ENCODE measurements at regions of chr14 and their contacts with region 1.

Region 1: GRCh38 chr14:93206793-93207467 is at the starts of genes GON7 and UBR7:
- DNase-seq: peak; percentile 97
- ATAC-seq: peak; percentile 92
- H3K4me3 Mint-ChIP-seq: peak within 1 kb of the TSS; percentile 99
- H3K27ac Mint-ChIP-seq: peak within 1 kb of the TSS; percentile 99
- H3K4me1 Mint-ChIP-seq: peaks cover 14% of the 10 kb centered on the region
- H3K27me3 Mint-ChIP-seq: no peaks in the 10 kb centered on the region
- CTCF ChIP-seq: no peak
- total RNA-seq, gene GON7: 7.1 to 8.0 TPM (median 7.4 TPM) in 3 replicates
- total RNA-seq, gene UBR7: 21.1 to 28.9 TPM (median 24.0 TPM) in 3 replicates

Region 2: DNA sequence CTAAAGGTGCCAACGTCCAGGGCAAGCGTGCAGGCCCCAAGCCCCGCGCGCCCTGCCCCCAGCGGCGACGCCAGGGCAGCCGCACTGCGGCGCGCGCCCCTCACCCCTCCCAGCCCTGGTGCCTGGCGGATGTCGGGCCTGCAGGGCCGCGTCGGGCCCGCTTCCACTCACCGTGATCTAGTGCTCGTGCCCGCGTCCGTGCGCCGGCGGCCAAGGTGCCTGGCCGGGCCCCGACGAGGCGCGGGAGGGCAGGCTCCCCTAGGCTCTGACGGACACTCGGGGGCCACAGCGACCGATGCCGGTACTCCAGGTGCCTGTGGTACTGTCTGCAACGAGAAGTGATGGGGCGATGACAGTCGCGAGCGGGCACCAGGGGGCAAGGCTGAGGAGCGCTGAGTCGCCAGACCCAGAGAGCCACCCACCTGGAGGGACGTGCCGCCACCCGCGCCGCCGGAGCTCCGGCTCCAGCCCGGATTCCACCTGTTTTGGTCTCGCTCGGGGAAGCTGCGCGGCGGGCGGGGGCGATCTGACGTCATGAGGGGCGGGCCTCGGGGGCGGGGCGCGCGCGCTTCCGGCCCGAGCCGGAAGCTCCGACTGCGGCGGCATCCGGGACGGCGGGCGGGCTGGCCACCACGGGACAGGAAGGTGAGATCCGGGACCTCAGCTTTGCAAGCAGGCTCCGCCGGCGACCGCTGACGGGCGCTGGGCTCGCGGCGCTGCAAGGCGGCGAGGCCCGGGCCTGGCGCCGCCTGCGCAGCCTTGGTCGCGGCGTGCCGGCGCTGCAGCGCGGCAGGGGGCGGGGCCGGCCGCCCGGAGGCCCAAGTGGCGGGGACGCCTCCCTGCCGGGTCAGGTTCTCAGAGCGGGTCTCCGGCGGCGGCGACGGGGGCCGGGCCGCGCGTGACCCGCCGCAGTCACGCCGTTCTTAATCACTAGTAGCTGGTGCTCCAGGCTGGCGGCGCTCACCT is 22.3 kb before region 1 on chr14 and contains the starts of genes LYSET and MOAP1:
- CTCF ChIA-PET with region 1: interaction called, 34 read pairs
- POLR2A ChIA-PET with region 1: interaction called, 23 read pairs
- DNase-seq: peak; percentile 89
- ATAC-seq: peak; percentile 88
- H3K4me3 Mint-ChIP-seq: peak within 1 kb of the TSS; percentile 96
- H3K27ac Mint-ChIP-seq: peak within 1 kb of the TSS; percentile 98
- H3K4me1 Mint-ChIP-seq: peaks cover 18% of the 10 kb centered on the region
- H3K27me3 Mint-ChIP-seq: no peaks in the 10 kb centered on the region
- CTCF ChIP-seq: no peak
- total RNA-seq, gene LYSET: 24.7 to 25.6 TPM (median 25.5 TPM) in 3 replicates
- total RNA-seq, gene MOAP1: 16.7 to 18.1 TPM (median 17.2 TPM) in 3 replicates

Region 3: GRCh38 chr14:93219103-93219726 is 12.3 kb after region 1 on chr14:
- CTCF ChIA-PET with region 1: interaction called, 32 read pairs
- POLR2A ChIA-PET with region 1: interaction called, 4 read pairs
- DNase-seq: peak; percentile 46
- ATAC-seq: peak; percentile 83; the same call in 1 of the 2 replicates
- H3K4me3 Mint-ChIP-seq: no peak overlapping the region
- H3K27ac Mint-ChIP-seq: no peak overlapping the region
- H3K4me1 Mint-ChIP-seq: no peaks in the 10 kb centered on the region
- H3K27me3 Mint-ChIP-seq: no peaks in the 10 kb centered on the region
- CTCF ChIP-seq: no peak

Region 4: DNA sequence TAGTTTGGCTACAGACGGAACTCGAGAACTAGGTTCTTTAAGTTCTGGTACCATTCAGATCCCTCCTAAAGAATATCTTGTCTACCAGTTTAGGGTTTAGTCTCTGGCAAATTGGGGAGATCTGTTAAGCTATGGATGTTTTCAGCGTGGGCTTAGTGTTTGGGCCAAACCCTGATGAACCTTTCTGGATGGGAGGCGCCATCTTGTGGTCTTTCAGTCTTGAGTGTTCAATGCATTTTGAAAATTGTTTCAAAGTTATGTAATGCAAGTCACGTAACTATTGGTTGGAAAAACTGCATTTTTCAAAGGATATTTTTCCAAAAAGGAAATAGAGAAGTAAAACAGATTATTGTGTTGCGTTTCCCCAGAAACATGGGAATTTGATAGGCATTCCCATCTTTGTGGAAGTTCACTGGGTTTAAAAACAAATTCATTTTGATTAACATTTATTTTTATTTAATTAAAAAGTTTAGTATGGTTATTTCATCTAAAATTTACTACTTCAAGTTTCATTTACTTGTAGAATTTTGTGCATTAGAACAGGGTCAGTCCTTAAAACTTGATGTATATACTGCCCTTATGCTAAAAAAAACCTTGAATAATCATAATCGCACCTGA is 412.4 kb after region 1 on chr14:
- CTCF ChIA-PET with region 1: interaction called, 14 read pairs
- POLR2A ChIA-PET with region 1: no interaction called
- DNase-seq: peak; percentile 44
- ATAC-seq: peak; percentile 47; the same call in 1 of the 2 replicates
- H3K4me3 Mint-ChIP-seq: no peak overlapping the region
- H3K27ac Mint-ChIP-seq: no peak overlapping the region
- H3K4me1 Mint-ChIP-seq: peaks cover 9% of the 10 kb centered on the region; the same call in 1 of the 2 replicates
- H3K27me3 Mint-ChIP-seq: no peaks in the 10 kb centered on the region
- CTCF ChIP-seq: no peak

Measured in WTC11 (cell line).